ENCODE measurements at regions of chr16 and their contacts with region 1.

Region 1: GRCh38 chr16:17369421-17370222 is 101.1 kb downstream of the XYLT1 start:
- DNase-seq: no peak
- H3K4me3 ChIP-seq: no peak overlapping the region
- H3K27ac ChIP-seq: no peak overlapping the region
- H3K4me1 ChIP-seq: no peaks in the 10 kb centered on the region
- H3K27me3 ChIP-seq: no peaks in the 10 kb centered on the region
- CTCF ChIP-seq: no peak

Region 2: DNA sequence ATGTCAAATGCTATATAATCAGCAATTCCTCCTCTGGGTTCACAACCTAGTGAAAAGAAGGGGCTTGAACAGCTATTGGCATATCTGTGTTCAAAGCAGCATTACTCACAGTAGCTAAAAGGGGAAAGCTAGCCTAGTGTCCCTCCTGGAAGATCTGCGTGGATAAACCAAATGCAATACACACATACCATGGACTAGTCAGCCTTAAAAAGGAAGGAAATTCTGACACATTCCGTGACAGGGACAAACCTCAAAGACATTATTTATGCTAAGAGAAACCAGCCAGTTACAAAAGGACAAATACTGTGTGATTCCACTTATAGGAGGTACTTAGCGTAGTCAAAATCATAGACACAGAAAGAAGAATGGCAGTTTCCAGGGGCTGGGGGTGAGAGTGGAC is 11.0 kb after region 1 on chr16:
- CTCF ChIA-PET with region 1: no interaction called
- dilution Hi-C with region 1: no loop called
- in situ Hi-C with region 1: no loop called
- intact Hi-C with region 1: no loop called
- DNase-seq: no peak
- H3K4me3 ChIP-seq: no peak overlapping the region
- H3K27ac ChIP-seq: no peak overlapping the region
- H3K4me1 ChIP-seq: no peaks in the 10 kb centered on the region
- H3K27me3 ChIP-seq: no peaks in the 10 kb centered on the region
- CTCF ChIP-seq: no peak

Region 3: DNA sequence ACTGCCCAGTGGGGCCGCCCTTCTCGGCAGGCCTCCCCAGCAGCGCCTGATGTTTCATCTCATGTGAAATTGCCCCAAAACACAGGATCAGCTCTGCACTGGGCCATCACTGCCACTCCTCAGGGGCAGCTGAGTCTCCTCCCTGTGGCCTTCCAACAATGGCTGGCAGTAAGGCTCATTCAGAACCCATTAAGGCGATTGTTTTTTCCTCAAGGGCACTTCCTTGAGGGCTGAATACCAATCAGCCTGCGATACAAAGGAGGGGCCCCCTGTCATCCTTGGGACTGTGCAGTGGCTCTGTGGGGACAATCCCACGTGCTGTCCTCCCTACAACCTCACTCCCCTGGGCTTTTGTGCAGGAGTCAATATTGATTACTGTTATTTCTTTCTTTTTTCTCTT is 53.6 kb after region 1 on chr16:
- CTCF ChIA-PET with region 1: no interaction called
- dilution Hi-C with region 1: loop called (anchors 5 kb)
- in situ Hi-C with region 1: loop called in 1 of 2 experiments (anchors 10 kb)
- intact Hi-C with region 1: no loop called
- DNase-seq: no peak
- H3K4me3 ChIP-seq: no peak overlapping the region
- H3K27ac ChIP-seq: no peak overlapping the region
- H3K4me1 ChIP-seq: no peaks in the 10 kb centered on the region
- H3K27me3 ChIP-seq: no peaks in the 10 kb centered on the region
- CTCF ChIP-seq: no peak

Region 4: DNA sequence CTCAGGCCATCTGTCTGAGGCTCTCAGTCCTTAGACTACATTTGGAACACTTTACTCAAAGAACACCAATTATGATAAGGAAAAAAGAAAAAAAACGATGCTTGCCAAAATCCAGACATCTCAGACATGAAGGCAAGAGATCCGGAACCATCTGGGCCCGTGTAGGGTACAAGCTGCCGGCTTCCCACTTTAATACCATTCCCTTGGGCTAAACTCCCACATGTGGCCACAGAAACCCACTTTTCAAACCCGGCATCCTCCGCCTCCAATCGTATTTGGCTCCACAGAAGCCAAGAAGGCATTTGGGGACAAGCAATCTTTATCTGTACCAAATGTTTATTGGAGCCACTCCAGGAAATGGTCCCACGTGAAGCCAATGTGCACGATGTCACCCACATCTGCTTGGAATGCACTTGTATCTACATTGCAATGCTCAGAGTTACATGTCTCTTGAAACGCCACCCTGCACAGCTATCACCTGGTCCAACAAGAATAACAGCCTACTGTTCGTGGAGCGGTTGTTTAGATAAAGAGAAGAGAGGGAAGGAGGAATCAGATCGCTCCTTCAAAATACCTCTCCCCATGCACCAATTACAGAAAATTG is 67.6 kb after region 1 on chr16:
- CTCF ChIA-PET with region 1: no interaction called
- dilution Hi-C with region 1: no loop called
- in situ Hi-C with region 1: no loop called
- intact Hi-C with region 1: no loop called
- DNase-seq: no peak
- H3K4me3 ChIP-seq: no peak overlapping the region
- H3K27ac ChIP-seq: no peak overlapping the region
- H3K4me1 ChIP-seq: no peaks in the 10 kb centered on the region
- H3K27me3 ChIP-seq: no peaks in the 10 kb centered on the region
- CTCF ChIP-seq: no peak

Region 5: DNA sequence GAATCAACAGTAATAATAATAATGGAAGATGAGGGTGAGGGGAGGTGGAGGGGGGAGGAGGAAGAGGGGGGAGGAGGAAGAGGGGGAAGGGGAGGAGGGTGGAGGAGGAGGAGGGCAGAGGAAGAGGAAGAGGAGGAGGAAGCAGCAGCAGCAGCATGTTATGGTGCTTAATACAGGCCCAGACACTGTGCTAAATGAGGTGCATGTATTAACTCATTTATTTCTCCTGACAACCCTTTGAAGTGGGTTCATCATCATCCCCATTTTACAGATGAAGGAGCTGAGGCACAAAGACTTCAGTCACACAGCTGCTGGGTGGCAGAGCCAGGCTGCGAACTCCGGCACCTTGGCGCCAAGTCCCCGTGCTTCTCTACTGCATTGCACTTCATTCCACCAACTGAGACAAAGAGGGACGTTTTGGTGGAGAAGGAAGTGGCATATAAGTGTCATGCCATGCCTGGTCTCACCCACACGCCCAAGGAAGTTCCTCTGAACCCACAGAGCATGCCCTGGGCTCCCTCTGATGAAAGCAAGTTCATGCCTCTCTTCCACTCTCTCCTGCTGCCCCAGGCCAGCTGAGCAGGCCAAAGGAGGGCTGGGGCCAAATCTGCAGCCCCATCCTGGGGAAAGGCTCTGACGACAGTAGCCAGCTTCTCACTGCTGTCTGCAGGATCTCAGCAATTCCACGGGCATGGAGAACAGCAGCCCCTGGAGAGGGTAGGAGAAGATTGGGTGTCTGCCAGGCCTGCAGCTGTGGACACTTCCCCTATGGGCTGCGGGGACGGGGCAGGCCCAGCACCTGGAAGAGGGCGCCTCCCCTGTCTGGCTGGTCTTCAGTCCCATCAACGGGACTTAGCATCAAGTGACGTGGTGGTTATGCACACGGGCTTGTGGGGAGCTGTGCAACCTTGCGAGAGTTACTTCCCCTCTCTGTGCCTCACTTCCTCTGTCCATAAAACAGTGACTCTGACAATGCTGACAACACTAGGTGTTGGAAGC is 79.3 kb after region 1 on chr16:
- CTCF ChIA-PET with region 1: no interaction called
- dilution Hi-C with region 1: no loop called
- in situ Hi-C with region 1: no loop called
- intact Hi-C with region 1: no loop called
- DNase-seq: no peak
- H3K4me3 ChIP-seq: no peak overlapping the region
- H3K27ac ChIP-seq: no peak overlapping the region
- H3K4me1 ChIP-seq: no peaks in the 10 kb centered on the region
- H3K27me3 ChIP-seq: no peaks in the 10 kb centered on the region
- CTCF ChIP-seq: no peak

Region 6: DNA sequence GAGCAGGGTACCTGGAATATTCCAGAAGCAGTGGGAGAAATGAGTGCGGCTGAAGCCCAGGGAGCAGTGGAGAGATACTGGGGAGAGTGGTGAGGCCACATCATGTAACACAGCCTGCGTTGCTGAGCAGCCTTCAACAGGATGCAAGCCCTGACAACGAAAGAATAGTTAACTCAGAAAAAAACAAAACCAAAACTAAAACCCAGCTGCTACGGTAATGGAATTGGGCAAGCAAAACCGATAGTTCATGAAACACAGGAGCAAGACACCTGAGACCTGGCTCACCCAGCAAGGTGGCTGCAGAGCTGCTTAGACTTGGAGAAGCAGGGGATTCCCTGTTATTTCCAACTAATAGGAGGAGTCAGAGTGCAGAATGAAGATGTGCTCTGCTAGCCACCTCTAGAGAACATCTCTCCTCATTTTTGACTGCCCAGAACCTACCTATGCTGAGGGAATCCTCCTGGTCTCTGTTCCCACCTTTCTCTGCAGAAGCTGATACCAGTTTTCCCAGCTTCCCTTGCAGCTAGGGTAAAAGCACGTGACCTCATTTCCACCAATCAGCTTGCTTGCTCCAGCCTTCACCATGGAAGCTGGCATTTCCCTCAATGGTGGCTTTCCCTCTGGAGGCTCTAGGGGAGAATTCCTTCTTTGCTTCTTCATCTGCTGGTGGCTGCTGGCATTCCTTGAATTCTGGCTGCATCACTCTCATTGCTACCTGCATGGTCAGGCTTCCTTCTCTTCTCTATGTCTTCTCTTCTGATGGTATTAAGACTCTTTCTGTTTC is 160.6 kb after region 1 on chr16:
- CTCF ChIA-PET with region 1: no interaction called
- dilution Hi-C with region 1: no loop called
- in situ Hi-C with region 1: no loop called
- intact Hi-C with region 1: no loop called
- DNase-seq: no peak
- H3K4me3 ChIP-seq: no peak overlapping the region
- H3K27ac ChIP-seq: no peak overlapping the region
- H3K4me1 ChIP-seq: no peaks in the 10 kb centered on the region
- H3K27me3 ChIP-seq: no peaks in the 10 kb centered on the region
- CTCF ChIP-seq: no peak

Measured in mammary epithelial cell (primary cell).